ENCODE measurements at regions of chr15 and their contacts with region 1.

Region 1: GRCh38 chr15:44195151-44195740 is at the start of gene FRMD5:
- DNase-seq: peak; percentile 99
- H3K4me3 ChIP-seq: peak within 1 kb of the TSS; percentile 34 to 77 (median 58)
- H3K27ac ChIP-seq: peak within 1 kb of the TSS; percentile 82
- H3K4me1 ChIP-seq: peaks cover 33% of the 10 kb centered on the region
- H3K27me3 ChIP-seq: no peaks in the 10 kb centered on the region
- CTCF ChIP-seq: peak; percentile 32 to 60
- POLR2A ChIP-seq: peak; percentile 88
- total RNA-seq, gene FRMD5: 16.7 and 18.2 TPM in 2 replicates

Region 2: GRCh38 chr15:43913026-43913927 is 282.0 kb before region 1 on chr15:
- CTCF ChIA-PET with region 1: interaction called, 5 read pairs
- POLR2A ChIA-PET with region 1: no interaction called
- dilution Hi-C with region 1: no loop called
- intact Hi-C with region 1: loop called (anchors 10 kb)
- DNase-seq: peak; percentile 98
- H3K4me3 ChIP-seq: no peak overlapping the region
- H3K27ac ChIP-seq: peak overlapping the region; percentile 89
- H3K4me1 ChIP-seq: peaks cover 38% of the 10 kb centered on the region
- H3K27me3 ChIP-seq: no peaks in the 10 kb centered on the region
- CTCF ChIP-seq: no peak
- POLR2A ChIP-seq: peak; percentile 46

Region 3: GRCh38 chr15:44081026-44082013 is 113.9 kb before region 1 on chr15:
- CTCF ChIA-PET with region 1: no interaction called
- POLR2A ChIA-PET with region 1: no interaction called
- dilution Hi-C with region 1: no loop called
- intact Hi-C with region 1: loop called (anchors 5 kb)
- DNase-seq: peak; percentile 90
- H3K4me3 ChIP-seq: peak overlapping the region in 1 of 3 experiments; percentile 17
- H3K27ac ChIP-seq: peak overlapping the region; percentile 80
- H3K4me1 ChIP-seq: peaks cover 48% of the 10 kb centered on the region
- H3K27me3 ChIP-seq: no peaks in the 10 kb centered on the region
- CTCF ChIP-seq: no peak
- POLR2A ChIP-seq: no peak

Region 4: GRCh38 chr15:44157685-44158099 is 37.6 kb before region 1 on chr15:
- CTCF ChIA-PET with region 1: interaction called, 3 read pairs
- POLR2A ChIA-PET with region 1: no interaction called
- dilution Hi-C with region 1: no loop called
- intact Hi-C with region 1: loop called (anchors 1 kb)
- DNase-seq: peak; percentile 94
- H3K4me3 ChIP-seq: peak overlapping the region in 1 of 3 experiments; percentile 29
- H3K27ac ChIP-seq: peak overlapping the region; percentile 79
- H3K4me1 ChIP-seq: peaks cover 28% of the 10 kb centered on the region
- H3K27me3 ChIP-seq: no peaks in the 10 kb centered on the region
- CTCF ChIP-seq: no peak
- POLR2A ChIP-seq: peak; percentile 42

Region 5: DNA sequence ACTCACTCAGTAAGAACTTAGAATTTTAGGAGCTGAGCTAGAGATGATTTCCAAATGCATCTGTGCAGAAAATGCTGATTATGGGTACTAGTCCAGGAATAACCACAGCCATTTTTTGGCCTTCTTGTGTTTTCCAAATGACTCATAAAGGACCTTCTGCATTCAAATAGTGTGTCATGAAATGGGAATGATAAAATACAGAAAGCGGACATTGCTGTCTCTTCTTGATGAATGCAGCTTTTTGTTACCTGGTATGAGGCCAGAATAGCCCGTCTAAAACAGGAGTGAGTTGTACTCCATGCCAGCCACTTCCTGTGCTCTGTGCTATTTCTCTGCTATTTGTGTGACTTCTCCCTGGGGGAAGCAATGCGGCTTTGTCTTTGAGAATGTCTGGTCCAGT is 20.3 kb after region 1 on chr15:
- CTCF ChIA-PET with region 1: interaction called, 6 read pairs
- POLR2A ChIA-PET with region 1: interaction called, 4 read pairs
- dilution Hi-C with region 1: no loop called
- intact Hi-C with region 1: loop called (anchors 2 kb)
- DNase-seq: peak; percentile 61
- H3K4me3 ChIP-seq: peak overlapping the region in 1 of 3 experiments; percentile 13
- H3K27ac ChIP-seq: no peak overlapping the region
- H3K4me1 ChIP-seq: peaks cover 14% of the 10 kb centered on the region
- H3K27me3 ChIP-seq: no peaks in the 10 kb centered on the region
- CTCF ChIP-seq: no peak
- POLR2A ChIP-seq: no peak